ENCODE measurements at regions of chrX and their contacts with region 1.

Region 1: DNA sequence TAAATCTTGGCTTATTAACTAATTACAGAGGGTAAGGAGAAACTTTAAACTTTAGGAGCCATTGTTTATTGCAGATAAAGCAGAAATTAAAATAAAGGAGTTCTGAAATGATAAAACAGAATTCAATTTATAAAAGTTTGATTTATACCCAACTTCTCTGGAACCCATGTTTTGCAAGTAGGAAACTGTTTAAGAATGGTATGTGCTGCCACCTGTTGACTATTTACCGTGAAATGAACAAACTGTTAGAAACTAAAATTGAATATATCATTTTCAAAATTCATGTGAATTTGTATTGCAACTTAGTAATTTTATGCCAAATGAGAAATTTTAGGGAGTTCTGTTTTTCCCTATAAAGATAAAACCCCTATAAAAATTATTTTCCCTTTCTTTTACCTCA is 11.0 kb upstream of the TBC1D8B start:
- DNase-seq: no peak
- H3K4me3 ChIP-seq: no peak overlapping the region
- H3K27ac ChIP-seq: no peak overlapping the region
- H3K4me1 ChIP-seq: no peaks in the 10 kb centered on the region
- H3K27me3 ChIP-seq: no peaks in the 10 kb centered on the region
- CTCF ChIP-seq: peak in 2 of 6 experiments; percentile 36 to 38
- POLR2A ChIP-seq: no peak

Region 2: DNA sequence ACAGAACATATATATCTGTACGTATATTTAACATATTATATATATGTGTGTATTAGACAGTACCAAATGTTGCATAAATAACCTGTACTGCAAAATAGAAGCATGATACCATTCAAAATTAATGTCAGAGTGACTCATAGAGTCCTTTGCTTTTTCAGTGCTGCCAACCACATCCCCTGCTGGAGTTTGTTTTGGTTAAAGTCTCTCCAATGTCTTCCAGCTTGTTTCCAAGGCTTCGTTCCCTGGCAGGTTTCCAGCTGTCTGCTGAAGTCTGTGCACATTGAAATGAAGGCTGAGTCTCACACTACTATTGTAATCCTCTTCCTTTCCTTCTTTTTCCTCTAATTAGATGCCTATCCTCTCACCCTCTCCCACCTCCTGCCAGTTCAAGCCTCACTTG is 954.3 kb before region 1 on chrX:
- intact Hi-C with region 1: no loop called
- DNase-seq: peak; percentile 84 to 87
- H3K4me3 ChIP-seq: no peak overlapping the region
- H3K27ac ChIP-seq: no peak overlapping the region
- H3K4me1 ChIP-seq: no peaks in the 10 kb centered on the region
- H3K27me3 ChIP-seq: no peaks in the 10 kb centered on the region
- CTCF ChIP-seq: no peak
- POLR2A ChIP-seq: no peak

Region 3: GRCh38 chrX:106481341-106481740 is 310.2 kb before region 1 on chrX:
- intact Hi-C with region 1: loop called (anchors 10 kb)
- DNase-seq: peak; percentile 25 to 29
- H3K4me3 ChIP-seq: no peak overlapping the region
- H3K27ac ChIP-seq: no peak overlapping the region
- H3K4me1 ChIP-seq: no peaks in the 10 kb centered on the region
- H3K27me3 ChIP-seq: no peaks in the 10 kb centered on the region
- CTCF ChIP-seq: peak; percentile 36 to 78 (median 64)
- POLR2A ChIP-seq: no peak

Region 4: DNA sequence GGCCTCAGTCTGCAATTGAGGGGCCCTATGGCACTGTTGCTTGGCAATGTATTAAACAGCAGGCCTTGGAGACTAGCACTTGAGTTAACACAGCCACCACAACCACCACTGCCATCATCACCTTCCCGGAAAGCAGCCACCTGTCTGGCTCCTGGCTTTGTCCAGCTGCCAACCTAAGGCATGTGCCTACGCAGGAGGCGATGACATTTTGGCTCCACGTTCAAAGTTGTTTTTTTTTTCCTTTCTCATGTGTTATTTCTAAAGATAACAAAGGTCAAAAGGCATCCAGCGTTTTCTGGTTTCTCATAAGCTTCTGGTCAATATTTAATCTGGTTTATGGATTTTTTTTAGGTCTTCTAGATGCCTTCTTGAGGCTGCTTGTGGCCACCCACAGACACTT is 136.2 kb after region 1 on chrX:
- intact Hi-C with region 1: no loop called
- DNase-seq: peak; percentile 30 to 53
- H3K4me3 ChIP-seq: no peak overlapping the region
- H3K27ac ChIP-seq: peak overlapping the region in 1 of 3 donors; percentile 48
- H3K4me1 ChIP-seq: no peaks in the 10 kb centered on the region
- H3K27me3 ChIP-seq: no peaks in the 10 kb centered on the region
- CTCF ChIP-seq: no peak
- POLR2A ChIP-seq: no peak